ENCODE measurements at regions of chr6 and their contacts with region 1.

Region 1: GRCh38 chr6:72411872-72412708 is 209.8 kb upstream of the KCNQ5 start:
- DNase-seq: peak; percentile 73
- H3K4me3 Mint-ChIP-seq: no peak overlapping the region
- H3K27ac Mint-ChIP-seq: no peak overlapping the region
- H3K4me1 Mint-ChIP-seq: no peaks in the 10 kb centered on the region
- H3K27me3 Mint-ChIP-seq: peaks cover 23% of the 10 kb centered on the region
- CTCF ChIP-seq: peak; percentile 100

Region 2: GRCh38 chr6:72348926-72349325 is 63.2 kb before region 1 on chr6:
- CTCF ChIA-PET with region 1: no interaction called
- POLR2A ChIA-PET with region 1: no interaction called
- intact Hi-C with region 1: no loop called
- DNase-seq: no peak
- H3K4me3 Mint-ChIP-seq: no peak overlapping the region
- H3K27ac Mint-ChIP-seq: no peak overlapping the region
- H3K4me1 Mint-ChIP-seq: no peaks in the 10 kb centered on the region
- H3K27me3 Mint-ChIP-seq: peaks cover 46% of the 10 kb centered on the region
- CTCF ChIP-seq: no peak

Region 3: DNA sequence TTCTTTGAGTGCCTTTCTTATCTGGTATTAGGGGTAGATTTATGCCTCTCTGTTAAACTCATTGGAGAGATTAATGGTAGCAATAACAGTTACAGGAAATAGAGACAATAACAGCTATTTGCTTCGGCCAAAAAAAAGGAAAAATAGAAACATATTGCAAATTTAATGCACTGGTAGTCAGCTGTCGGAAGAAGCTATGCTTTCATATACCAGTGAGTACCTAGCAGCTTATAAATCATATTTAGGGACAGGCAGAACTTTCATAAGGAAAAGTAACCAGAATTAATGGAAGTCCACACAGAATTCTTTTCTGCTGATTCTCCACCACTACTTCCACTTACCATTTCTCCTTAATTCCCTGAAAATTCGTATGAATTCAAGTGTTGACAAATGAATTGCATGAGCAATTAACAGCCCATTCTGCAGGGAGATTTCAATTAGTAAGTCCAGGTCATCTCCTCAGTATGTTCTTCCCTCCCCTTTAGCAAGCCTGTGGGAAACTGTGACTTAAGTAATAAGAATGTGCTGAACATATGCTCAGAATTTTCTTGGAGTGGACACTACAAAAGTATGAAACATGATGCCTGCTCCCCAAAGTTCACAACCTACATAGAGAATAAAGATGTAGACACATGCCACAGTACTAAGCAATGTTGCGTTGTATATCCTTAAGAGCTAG is 13.1 kb after region 1 on chr6:
- CTCF ChIA-PET with region 1: interaction called, 73 read pairs
- POLR2A ChIA-PET with region 1: no interaction called
- intact Hi-C with region 1: no loop called
- DNase-seq: no peak
- H3K4me3 Mint-ChIP-seq: no peak overlapping the region
- H3K27ac Mint-ChIP-seq: no peak overlapping the region
- H3K4me1 Mint-ChIP-seq: no peaks in the 10 kb centered on the region
- H3K27me3 Mint-ChIP-seq: no peaks in the 10 kb centered on the region
- CTCF ChIP-seq: no peak

Region 4: DNA sequence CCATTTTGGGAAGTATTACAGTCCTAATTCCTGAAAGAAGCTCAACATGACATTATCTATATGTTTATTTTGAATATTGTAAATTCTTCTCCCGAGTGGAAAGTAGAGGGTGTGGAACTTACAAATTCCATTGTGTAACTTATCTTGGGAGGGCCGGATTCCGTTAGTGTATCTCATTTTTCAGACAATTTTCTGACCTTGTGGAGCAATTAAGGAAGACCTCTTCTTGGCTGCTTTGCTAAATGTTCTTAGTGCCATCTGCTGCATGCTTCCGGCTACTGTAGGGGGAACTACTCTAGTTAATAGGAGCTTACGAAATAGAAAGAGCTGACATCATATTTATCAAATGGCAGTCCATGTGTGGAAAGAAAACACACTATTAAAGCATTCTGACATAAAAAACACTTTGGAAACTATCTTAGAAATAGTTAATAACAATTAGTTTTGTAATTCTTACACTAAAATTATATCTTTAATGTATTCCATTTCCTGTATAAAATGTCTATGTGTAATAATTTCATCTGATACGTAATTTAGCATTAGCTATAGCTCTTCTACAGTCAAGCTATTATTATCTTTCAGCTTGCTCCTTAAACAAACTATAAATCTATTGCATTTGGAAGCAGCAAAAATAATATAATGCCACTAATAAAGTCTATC is 168.3 kb after region 1 on chr6:
- CTCF ChIA-PET with region 1: interaction called, 104 read pairs
- POLR2A ChIA-PET with region 1: interaction called, 11 read pairs
- intact Hi-C with region 1: loop called (anchors 1 kb)
- DNase-seq: peak; percentile 73
- H3K4me3 Mint-ChIP-seq: no peak overlapping the region
- H3K27ac Mint-ChIP-seq: no peak overlapping the region
- H3K4me1 Mint-ChIP-seq: no peaks in the 10 kb centered on the region
- H3K27me3 Mint-ChIP-seq: no peaks in the 10 kb centered on the region
- CTCF ChIP-seq: peak; percentile 61

Region 5: DNA sequence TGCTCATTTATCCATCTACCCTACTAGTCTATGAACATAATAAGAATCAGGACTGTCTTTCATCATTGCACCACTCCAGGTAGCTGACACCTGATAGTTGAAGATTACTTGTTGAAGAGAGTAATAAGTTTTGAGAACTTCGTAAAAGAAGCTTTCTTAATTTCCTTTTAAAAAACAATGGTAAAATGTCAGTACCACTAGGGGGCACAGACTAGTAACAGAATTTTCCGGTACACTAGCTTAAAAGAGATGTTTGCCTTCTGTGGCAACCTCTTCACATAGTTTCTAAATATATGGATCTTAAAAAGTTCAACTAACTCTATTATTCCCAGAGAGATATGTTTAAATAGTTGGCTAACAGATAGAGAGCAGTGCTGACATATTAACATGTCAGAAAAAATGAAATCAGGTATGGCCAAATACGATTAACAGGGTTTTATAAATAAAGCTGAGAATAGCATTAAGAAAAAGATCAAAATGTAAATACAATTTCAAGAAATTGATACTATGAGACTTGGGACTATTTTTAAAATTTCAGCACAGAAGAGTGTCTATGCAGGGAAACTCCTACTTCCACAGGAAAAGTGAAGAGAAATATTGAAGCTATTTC is 204.4 kb after region 1 on chr6:
- CTCF ChIA-PET with region 1: interaction called, 28 read pairs
- POLR2A ChIA-PET with region 1: no interaction called
- intact Hi-C with region 1: no loop called
- DNase-seq: peak; percentile 49
- H3K4me3 Mint-ChIP-seq: no peak overlapping the region
- H3K27ac Mint-ChIP-seq: no peak overlapping the region
- H3K4me1 Mint-ChIP-seq: peaks cover 7% of the 10 kb centered on the region
- H3K27me3 Mint-ChIP-seq: no peaks in the 10 kb centered on the region
- CTCF ChIP-seq: peak; percentile 79

Region 6: GRCh38 chr6:73180763-73181619 is 768.9 kb after region 1 on chr6:
- CTCF ChIA-PET with region 1: interaction called, 10 read pairs
- POLR2A ChIA-PET with region 1: no interaction called
- intact Hi-C with region 1: loop called (anchors 1 kb)
- DNase-seq: peak; percentile 70
- H3K4me3 Mint-ChIP-seq: peak overlapping the region; percentile 51
- H3K27ac Mint-ChIP-seq: no peak overlapping the region
- H3K4me1 Mint-ChIP-seq: no peaks in the 10 kb centered on the region
- H3K27me3 Mint-ChIP-seq: no peaks in the 10 kb centered on the region
- CTCF ChIP-seq: peak; percentile 81